ENCODE measurements at regions of chrX and their contacts with region 1.

Region 1: GRCh38 chrX:98607773-98608172 is 1724.1 kb downstream of the RPA4 start:
- DNase-seq: no peak
- ATAC-seq: no peak
- H3K4me3 ChIP-seq: no peak overlapping the region
- H3K27ac ChIP-seq: no peak overlapping the region
- H3K4me1 ChIP-seq: no peaks in the 10 kb centered on the region
- H3K27me3 ChIP-seq: no peaks in the 10 kb centered on the region

Region 2: DNA sequence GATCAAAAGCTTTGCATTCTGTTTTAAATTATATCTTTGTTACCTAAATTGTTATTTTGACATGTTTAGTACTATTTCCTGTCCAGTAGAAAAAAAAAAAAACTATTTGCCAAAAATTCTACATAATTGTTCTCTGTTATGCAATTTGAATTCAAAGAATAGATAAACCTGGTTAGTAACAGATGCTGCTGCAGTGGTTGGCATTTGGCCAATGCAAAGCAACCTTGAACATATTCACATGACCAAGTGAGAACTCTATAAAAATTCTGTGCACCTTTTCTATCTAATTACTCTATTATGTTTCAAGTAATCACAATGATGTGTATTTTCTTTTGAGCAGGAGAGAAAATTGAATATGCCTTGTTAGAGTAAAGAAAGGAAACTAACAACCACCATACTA is 250.6 kb before region 1 on chrX:
- intact Hi-C with region 1: loop called in 1 of 4 experiments (anchors 10 kb)
- DNase-seq: no peak
- ATAC-seq: no peak
- H3K4me3 ChIP-seq: no peak overlapping the region
- H3K27ac ChIP-seq: no peak overlapping the region
- H3K4me1 ChIP-seq: no peaks in the 10 kb centered on the region
- H3K27me3 ChIP-seq: no peaks in the 10 kb centered on the region

Region 3: DNA sequence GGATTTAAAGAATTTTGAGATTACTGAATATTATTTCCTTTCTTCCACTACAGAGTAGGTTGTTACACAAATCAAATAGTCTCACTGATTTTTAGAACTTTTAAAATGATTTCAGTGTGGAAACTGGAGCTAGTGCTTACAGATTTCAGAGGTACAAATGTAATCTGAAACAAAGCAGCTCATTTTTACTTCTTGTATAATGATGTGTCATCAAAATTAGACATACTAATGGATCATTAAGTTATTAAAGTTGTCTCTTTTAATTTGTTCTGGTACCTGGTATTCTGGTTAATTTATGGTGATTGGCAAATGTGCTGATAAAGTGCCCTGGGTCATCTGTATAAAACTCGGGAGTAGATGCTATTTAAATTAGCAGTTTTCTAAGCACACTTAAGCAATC is 195.7 kb before region 1 on chrX:
- intact Hi-C with region 1: no loop called
- DNase-seq: no peak
- ATAC-seq: no peak
- H3K4me3 ChIP-seq: no peak overlapping the region
- H3K27ac ChIP-seq: no peak overlapping the region
- H3K4me1 ChIP-seq: no peaks in the 10 kb centered on the region
- H3K27me3 ChIP-seq: no peaks in the 10 kb centered on the region

Region 4: GRCh38 chrX:98459669-98460068 is 148.1 kb before region 1 on chrX:
- intact Hi-C with region 1: no loop called
- DNase-seq: no peak
- ATAC-seq: no peak
- H3K4me3 ChIP-seq: no peak overlapping the region
- H3K27ac ChIP-seq: no peak overlapping the region
- H3K4me1 ChIP-seq: no peaks in the 10 kb centered on the region
- H3K27me3 ChIP-seq: no peaks in the 10 kb centered on the region